ENCODE measurements at regions of chr1 and their contacts with region 1.

Region 1: GRCh38 chr1:77281491-77282186 is at the start of gene AK5:
- DNase-seq: peak; percentile 9 to 82 (median 56)
- H3K4me3 ChIP-seq: peak within 1 kb of the TSS; percentile 61 to 92 (median 82)
- H3K27ac ChIP-seq: peak within 1 kb of the TSS; percentile 71 to 98 (median 94)
- H3K27me3 ChIP-seq: peaks cover 0 to 3% (median 0%) of the 10 kb centered on the region in 45 donors
- CTCF ChIP-seq: peak in 14 of 56 donors; percentile 2 to 37 (median 24)
- total RNA-seq, gene AK5: 74.1 to 345 (median 270) TPM

Region 2: GRCh38 chr1:77143529-77144121 is 138.0 kb before region 1 on chr1:
- intact Hi-C with region 1: loop called in 1 of 2 experiments (anchors 10 kb)
- DNase-seq: no peak
- H3K4me3 ChIP-seq: no peak overlapping the region
- H3K27ac ChIP-seq: no peak overlapping the region
- H3K27me3 ChIP-seq: no peaks in the 10 kb centered on the region
- CTCF ChIP-seq: peak in 54 of 56 donors; percentile 3 to 72 (median 52)

Region 3: GRCh38 chr1:77219166-77219887 is 62.3 kb before region 1 on chr1 and contains the start of gene PIGK:
- intact Hi-C with region 1: loop called (anchors 5 to 10 kb)
- DNase-seq: peak; percentile 75 to 90 (median 86)
- H3K4me3 ChIP-seq: peak within 1 kb of the TSS; percentile 54 to 97 (median 84)
- H3K27ac ChIP-seq: peak within 1 kb of the TSS; percentile 26 to 97 (median 89)
- H3K27me3 ChIP-seq: no peaks in the 10 kb centered on the region
- CTCF ChIP-seq: peak in 42 of 56 donors; percentile 3 to 54 (median 30)
- total RNA-seq, gene PIGK: 15.2 to 61.9 (median 34.6) TPM

Region 4: DNA sequence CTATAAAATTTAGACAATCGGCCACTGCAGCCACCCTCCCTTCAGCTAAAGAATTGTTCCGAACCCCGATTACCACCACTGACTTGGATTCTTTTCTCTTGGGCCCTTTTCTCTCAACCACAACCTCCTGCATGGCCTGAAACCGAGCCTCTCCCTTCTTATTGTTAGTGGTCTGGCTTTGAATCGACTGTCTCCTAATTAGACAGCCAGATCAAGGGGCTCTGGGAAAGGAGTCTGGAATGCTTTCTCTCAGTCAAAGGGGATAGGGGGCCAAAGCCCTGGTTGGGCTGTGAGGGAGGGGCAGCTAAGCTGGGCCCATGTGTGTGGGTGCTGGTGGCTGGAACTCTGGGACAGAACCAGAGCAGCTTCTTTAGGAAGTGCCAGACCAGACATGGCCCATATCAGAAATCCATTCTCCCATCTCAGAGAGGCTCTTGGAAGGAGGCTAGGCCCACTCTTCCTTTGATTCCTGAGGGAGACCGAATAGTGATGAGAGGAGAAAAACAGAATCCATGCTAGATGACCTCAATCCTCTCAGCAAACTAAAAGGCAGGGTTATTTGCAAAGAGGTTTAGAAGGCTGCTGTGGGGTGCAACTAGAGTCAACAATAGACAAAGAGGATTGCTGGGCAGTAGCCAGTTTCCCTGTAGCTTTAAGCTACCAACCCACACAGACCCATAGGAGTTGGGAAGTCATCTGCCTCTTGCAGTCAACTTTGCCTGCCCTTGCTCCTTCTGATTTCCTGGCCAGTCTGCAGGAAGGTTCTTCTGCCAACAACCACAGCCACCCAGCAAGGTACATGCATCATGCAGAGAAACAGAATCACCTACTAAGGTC is 117.8 kb after region 1 on chr1:
- intact Hi-C with region 1: loop called (anchors 5 to 10 kb)
- DNase-seq: peak in 4 of 10 donors; percentile 53 to 72 (median 62)
- H3K4me3 ChIP-seq: peak overlapping the region in 15 of 59 donors; percentile 3 to 31 (median 12)
- H3K27ac ChIP-seq: peak overlapping the region; percentile 81 to 99 (median 93)
- H3K27me3 ChIP-seq: no peaks in the 10 kb centered on the region
- CTCF ChIP-seq: peak in 1 of 56 donors; percentile 15

Region 5: DNA sequence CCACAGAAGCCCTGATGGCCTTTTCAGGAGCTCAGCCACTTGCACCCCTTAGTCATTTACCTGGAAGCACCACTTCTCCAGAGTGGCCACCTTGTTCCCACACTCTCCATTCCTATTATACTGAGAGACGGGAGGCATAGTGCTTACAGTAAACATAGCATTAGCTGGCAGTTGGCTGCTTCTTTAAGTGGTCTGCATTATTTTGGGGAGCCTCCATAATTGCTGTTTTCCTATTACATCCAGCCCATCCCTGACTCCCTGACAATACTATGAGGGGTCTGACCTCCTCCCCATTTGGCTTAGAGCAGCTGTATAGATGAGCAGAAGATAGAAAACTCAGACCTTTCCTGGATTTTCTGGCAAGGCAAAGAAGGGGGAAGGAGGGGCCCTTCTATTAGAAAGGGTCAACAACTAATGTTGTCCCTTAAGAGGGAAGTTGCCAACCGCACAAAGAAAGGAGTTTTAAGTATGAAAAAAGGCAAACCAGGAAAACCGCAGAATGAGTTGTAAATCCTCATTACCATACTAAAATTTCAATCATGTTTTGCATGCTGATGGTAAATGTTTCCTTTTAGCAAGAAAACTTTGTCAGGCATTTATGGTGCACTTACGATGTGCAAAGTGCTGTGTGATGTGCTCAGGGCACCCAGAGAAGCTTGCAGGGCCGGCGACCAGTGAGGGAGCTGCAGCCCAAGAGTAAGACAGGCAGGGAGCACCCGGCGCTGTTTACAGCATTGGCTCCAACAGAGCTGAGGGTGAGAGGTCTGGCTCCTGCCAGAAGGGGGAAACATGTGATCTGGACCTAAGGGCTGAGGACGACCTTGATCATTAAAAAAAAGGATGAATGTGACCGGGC is 233.5 kb after region 1 on chr1:
- intact Hi-C with region 1: loop called in 1 of 2 experiments (anchors 2 kb)
- DNase-seq: peak in 9 of 10 donors; percentile 53 to 84 (median 72)
- H3K4me3 ChIP-seq: peak overlapping the region in 31 of 59 donors; percentile 1 to 53 (median 23)
- H3K27ac ChIP-seq: peak overlapping the region; percentile 80 to 100 (median 97)
- H3K27me3 ChIP-seq: no peaks in the 10 kb centered on the region
- CTCF ChIP-seq: peak in 43 of 56 donors; percentile 4 to 65 (median 39)

Region 6: DNA sequence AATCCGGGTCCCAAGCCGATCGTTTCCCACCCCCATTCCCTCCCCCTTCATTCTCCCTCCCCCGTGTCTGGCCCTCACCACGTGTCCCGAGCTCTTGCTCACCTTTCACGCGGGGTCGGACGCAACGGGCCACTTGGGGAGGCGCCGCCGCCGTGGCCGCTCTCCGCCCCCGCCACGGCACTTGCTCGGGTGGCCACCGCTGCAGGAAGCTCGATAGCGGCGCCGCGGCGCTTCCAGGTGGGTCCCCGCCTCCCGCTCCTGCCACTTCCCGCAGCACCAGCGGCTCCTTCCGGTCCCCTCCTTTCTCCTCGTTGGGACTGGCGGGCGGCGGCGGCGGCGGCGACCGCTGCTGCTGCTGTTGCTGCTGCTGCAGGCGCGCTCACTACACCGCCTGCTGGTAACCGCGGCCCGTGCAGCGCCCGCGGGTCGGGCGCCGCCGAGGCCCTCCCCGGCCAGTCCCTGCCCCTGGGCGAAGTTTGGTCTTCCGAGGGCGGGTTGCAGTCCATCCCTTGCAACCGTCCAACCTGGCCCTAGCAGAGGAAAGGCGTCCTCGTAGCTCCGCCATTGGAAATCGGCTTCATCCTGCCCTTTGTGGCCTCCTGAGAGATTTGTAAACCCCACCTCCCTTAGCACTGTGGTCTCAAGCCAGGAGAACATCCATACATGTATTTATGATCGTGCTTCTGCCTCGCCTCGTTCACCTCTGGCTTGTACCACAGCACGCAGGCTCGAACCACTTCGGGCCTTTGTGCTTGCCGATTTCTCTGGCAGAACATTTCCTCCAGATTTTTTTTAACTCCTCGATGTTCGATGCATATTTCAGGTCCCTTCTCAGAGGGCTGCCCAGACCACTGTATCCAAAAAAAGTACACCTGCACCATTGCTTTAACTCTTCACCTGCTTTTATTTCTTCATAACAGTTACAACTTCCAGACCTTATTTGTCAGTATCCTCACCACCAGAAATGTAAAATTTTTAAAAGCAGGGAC is 401.8 kb after region 1 on chr1:
- intact Hi-C with region 1: loop called (anchors 2 to 5 kb)
- DNase-seq: peak; percentile 81 to 94 (median 90)
- H3K4me3 ChIP-seq: peak overlapping the region; percentile 52 to 98 (median 87)
- H3K27ac ChIP-seq: peak overlapping the region; percentile 83 to 100 (median 99)
- H3K27me3 ChIP-seq: no peaks in the 10 kb centered on the region
- CTCF ChIP-seq: peak; percentile 58 to 96 (median 88)

Region 7: DNA sequence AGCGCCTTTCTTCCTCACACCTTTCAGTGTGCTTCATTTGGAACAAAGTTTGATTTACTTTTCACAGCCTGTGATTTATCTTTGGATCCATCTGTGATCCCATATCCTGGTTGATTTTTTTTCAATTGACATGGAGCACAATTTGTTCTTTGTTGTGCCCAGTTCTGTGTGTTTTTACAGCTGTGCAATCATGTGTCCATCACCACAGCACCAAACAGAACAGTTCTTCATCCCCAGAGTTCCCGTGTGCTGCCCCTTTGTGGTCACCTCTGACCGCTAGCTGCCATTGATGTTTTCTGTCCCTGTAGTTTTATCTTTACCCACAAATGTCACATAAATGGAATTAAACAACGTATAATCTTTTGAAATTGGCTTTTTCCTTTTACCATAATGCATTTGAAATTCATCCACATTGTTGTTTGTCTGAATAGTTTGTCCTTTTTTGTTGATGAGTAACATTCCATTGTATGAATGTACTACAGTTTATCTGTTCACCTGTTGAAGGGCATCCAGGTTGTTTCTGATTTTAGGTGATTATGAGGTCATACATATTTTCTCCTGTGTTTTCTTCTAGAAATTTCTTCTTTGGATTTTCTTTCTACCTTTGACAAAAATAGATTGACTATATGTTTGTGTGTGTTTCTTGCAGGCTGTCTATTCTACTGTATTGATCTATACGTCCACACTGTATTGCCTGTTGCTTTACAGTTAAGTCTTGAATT is 515.2 kb after region 1 on chr1:
- intact Hi-C with region 1: no loop called
- DNase-seq: peak in 7 of 10 donors; percentile 27 to 66 (median 48)
- H3K4me3 ChIP-seq: peak overlapping the region in 7 of 59 donors; percentile 1 to 35 (median 10)
- H3K27ac ChIP-seq: peak overlapping the region; percentile 32 to 98 (median 89)
- H3K27me3 ChIP-seq: no peaks in the 10 kb centered on the region
- CTCF ChIP-seq: peak; percentile 29 to 80 (median 58)